ENCODE measurements at regions of chr5 and their contacts with region 1.

Region 1: DNA sequence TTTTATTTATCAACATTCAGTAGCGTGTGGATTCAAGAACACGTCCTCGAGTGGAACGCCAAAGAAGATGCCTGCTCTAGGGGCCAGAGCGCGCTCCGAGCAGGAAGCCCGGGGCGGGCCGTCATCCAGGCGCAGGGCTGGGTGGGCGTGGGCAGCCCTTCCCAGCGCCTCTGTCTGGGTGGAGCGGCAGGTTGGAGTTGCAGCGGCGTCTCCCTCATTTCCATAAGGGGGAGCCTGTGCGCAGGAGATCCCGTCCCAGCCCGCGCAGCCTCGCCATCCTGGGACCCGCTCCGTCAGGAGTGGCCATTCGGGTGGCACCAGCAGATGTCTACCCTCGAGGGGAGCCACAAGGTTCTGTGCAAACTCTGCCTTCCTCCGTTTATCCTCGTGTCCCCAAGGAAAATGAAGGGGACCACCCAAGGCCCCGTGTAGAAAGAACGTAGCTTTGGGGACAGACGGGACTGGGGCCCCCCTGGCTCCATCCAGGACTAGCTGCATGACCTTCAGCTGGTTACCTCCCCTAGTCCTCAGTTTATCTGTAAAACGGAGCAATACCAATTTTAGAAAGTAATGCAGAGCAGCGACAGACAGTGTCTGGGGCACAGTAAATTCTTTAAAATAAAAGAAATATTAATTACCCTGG is 155.5 kb upstream of the SMIM23 start:
- DNase-seq: peak; percentile 20
- H3K4me3 ChIP-seq: no peak overlapping the region
- H3K27ac ChIP-seq: no peak overlapping the region
- H3K4me1 ChIP-seq: no peaks in the 10 kb centered on the region
- H3K27me3 ChIP-seq: no peaks in the 10 kb centered on the region
- CTCF ChIP-seq: peak in 3 of 4 experiments; percentile 34 to 60 (median 48)
- POLR2A ChIP-seq: no peak

Region 2: GRCh38 chr5:171427318-171428167 is 202.6 kb before region 1 on chr5:
- intact Hi-C with region 1: no loop called
- DNase-seq: no peak
- H3K4me3 ChIP-seq: no peak overlapping the region
- H3K27ac ChIP-seq: no peak overlapping the region
- H3K4me1 ChIP-seq: no peaks in the 10 kb centered on the region
- H3K27me3 ChIP-seq: no peaks in the 10 kb centered on the region
- CTCF ChIP-seq: no peak
- POLR2A ChIP-seq: no peak

Region 3: DNA sequence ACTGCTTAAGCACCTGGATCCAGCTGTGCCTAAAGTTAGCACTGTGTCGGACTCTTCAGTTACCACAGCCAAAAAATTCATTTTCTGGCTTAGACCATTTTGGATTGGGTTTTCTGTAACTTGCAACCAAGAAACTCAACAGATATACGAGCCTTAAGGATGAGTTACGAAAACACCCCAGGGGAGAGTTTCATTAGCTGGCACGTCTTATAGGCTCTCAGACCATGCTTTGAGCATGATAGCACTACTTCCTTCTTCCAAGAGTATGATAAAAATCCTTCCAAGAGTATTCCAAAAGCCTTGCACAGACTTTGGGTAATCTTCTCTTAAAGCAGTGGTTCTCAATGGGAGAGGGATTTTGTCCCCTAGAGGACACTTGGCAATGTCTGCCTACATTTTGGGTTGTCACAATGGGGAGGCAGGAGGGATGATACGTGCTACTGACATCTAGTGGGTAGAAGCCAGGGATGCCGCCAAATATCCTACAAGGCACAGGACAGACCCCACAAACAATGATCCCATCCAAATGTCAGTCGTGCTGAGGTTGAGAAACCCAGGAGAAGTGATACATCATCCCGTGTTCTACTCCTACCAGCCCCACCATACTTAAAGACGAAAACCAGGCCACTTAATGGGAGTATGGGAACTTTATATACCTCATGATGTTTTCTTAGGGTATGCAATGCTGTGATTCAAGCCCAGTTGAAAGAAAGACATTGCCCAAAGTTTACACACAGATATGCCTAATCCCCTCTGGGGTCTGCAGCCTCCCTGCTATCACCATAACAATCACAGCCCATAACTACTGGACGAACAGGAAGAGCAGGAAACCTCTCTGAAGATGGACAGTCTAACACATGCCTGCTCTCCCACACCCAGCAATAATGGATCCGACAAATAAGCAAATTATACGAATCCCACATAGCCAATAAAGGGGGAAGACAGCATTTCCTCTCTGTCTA is 220.5 kb after region 1 on chr5:
- intact Hi-C with region 1: loop called (anchors 5 kb)
- DNase-seq: no peak
- H3K4me3 ChIP-seq: no peak overlapping the region
- H3K27ac ChIP-seq: no peak overlapping the region
- H3K4me1 ChIP-seq: no peaks in the 10 kb centered on the region
- H3K27me3 ChIP-seq: no peaks in the 10 kb centered on the region
- CTCF ChIP-seq: peak in 1 of 4 experiments; percentile 18
- POLR2A ChIP-seq: no peak

Region 4: DNA sequence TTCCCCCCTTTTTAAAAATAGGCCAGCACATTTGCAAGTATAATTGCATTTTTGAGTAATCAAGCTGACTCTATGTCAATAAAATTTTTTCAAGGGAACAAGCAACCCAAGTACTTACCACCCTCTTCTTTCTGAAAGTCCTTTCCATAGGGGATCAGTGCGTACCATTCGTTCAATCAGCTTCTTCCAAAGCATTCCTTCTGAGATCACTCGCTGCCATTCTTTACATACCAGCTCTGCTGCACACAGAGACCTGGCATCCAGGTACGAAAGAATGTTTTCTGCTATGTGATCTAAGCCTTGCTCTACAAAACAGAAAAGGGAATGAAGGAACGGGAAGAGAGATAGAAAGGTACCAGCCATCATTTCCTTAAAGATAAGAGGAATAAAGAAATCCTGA is 269.6 kb after region 1 on chr5:
- intact Hi-C with region 1: loop called (anchors 5 kb)
- DNase-seq: no peak
- H3K4me3 ChIP-seq: no peak overlapping the region
- H3K27ac ChIP-seq: no peak overlapping the region
- H3K4me1 ChIP-seq: no peaks in the 10 kb centered on the region
- H3K27me3 ChIP-seq: no peaks in the 10 kb centered on the region
- CTCF ChIP-seq: no peak
- POLR2A ChIP-seq: no peak